ENCODE measurements at regions of chr11 and their contacts with region 1.

Region 1: DNA sequence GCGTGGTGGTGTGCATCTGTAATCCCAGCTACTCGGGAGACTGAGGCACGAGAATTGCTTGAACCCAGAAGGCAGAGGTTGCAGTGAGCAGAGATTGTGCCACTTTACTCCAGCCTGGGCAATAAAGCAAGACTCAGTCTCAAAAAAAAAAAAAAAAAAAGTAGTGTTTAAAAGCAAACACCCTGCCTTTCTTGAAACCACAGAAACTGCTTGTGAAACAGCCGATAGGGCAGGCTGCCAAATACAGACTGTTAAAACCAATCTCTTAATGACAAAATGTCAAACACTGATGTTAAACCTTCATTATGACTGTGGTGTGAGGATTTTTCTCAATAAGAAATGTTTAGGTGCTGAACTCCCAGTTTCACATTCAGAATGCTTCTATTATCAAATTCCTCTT is 27.3 kb downstream of the MARK2 start:
- DNase-seq: peak; percentile 60
- H3K4me3 Mint-ChIP-seq: peak overlapping the region; percentile 68
- H3K27ac Mint-ChIP-seq: peak overlapping the region; percentile 45
- H3K4me1 Mint-ChIP-seq: peaks cover 78% of the 10 kb centered on the region
- H3K27me3 Mint-ChIP-seq: no peaks in the 10 kb centered on the region

Region 2: GRCh38 chr11:63813035-63813562 is 53.1 kb before region 1 on chr11 and contains the start of gene SPINDOC:
- intact Hi-C with region 1: loop called (anchors 1 kb)
- DNase-seq: peak; percentile 78
- H3K4me3 Mint-ChIP-seq: peak within 1 kb of the TSS; percentile 88
- H3K27ac Mint-ChIP-seq: peak within 1 kb of the TSS; percentile 55
- H3K4me1 Mint-ChIP-seq: peaks cover 34% of the 10 kb centered on the region
- H3K27me3 Mint-ChIP-seq: no peaks in the 10 kb centered on the region
- total RNA-seq, gene SPINDOC: 60.0 and 64.3 TPM in 2 replicates

Region 3: GRCh38 chr11:63855975-63856749 is 10.0 kb before region 1 on chr11:
- intact Hi-C with region 1: loop called (anchors 2 kb)
- DNase-seq: no peak
- H3K4me3 Mint-ChIP-seq: no peak overlapping the region
- H3K27ac Mint-ChIP-seq: no peak overlapping the region
- H3K4me1 Mint-ChIP-seq: peaks cover 29% of the 10 kb centered on the region
- H3K27me3 Mint-ChIP-seq: no peaks in the 10 kb centered on the region

Region 4: GRCh38 chr11:63888170-63889086 is 22.2 kb after region 1 on chr11:
- intact Hi-C with region 1: loop called (anchors 1 kb)
- DNase-seq: peak; percentile 57
- H3K4me3 Mint-ChIP-seq: peak overlapping the region; percentile 86
- H3K27ac Mint-ChIP-seq: peak overlapping the region; percentile 83
- H3K4me1 Mint-ChIP-seq: peaks cover 77% of the 10 kb centered on the region
- H3K27me3 Mint-ChIP-seq: no peaks in the 10 kb centered on the region

Region 5: DNA sequence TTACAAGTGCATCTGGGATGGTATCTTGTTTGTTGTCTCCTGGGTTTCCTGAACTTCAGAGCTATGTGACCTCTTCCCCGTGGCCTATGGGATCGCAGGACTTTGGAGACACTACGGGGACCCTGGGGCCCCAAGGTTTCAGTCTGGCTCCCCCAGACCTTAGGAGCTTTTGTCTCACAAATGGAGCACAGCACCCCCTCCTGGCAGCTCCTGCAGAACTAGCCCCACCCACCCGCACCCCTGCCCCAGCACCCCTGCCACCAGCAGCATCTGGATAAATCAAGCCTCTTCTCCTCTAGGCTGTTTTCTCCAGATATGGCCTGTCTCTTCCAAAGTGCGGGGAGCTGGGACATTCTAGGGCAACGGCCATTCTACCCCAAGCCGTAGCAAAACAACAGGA is 40.4 kb after region 1 on chr11:
- intact Hi-C with region 1: loop called (anchors 5 kb)
- DNase-seq: peak; percentile 20
- H3K4me3 Mint-ChIP-seq: no peak overlapping the region
- H3K27ac Mint-ChIP-seq: no peak overlapping the region
- H3K4me1 Mint-ChIP-seq: no peaks in the 10 kb centered on the region
- H3K27me3 Mint-ChIP-seq: no peaks in the 10 kb centered on the region

Region 6: GRCh38 chr11:63986156-63986931 is 120.1 kb after region 1 on chr11 and contains the start of gene OTUB1:
- intact Hi-C with region 1: loop called (anchors 1 kb)
- DNase-seq: peak; percentile 86
- H3K4me3 Mint-ChIP-seq: peak within 1 kb of the TSS; percentile 97
- H3K27ac Mint-ChIP-seq: peak within 1 kb of the TSS; percentile 96
- H3K4me1 Mint-ChIP-seq: peaks cover 32% of the 10 kb centered on the region
- H3K27me3 Mint-ChIP-seq: no peaks in the 10 kb centered on the region
- total RNA-seq, gene OTUB1: 104 and 114 TPM in 2 replicates

Region 7: GRCh38 chr11:64246871-64247728 is 380.9 kb after region 1 on chr11 and contains the start of gene PPP1R14B:
- intact Hi-C with region 1: no loop called
- DNase-seq: peak; percentile 79
- H3K4me3 Mint-ChIP-seq: peak within 1 kb of the TSS; percentile 94
- H3K27ac Mint-ChIP-seq: peak within 1 kb of the TSS; percentile 94
- H3K4me1 Mint-ChIP-seq: peaks cover 29% of the 10 kb centered on the region
- H3K27me3 Mint-ChIP-seq: peaks cover 1% of the 10 kb centered on the region
- total RNA-seq, gene PPP1R14B: 238 and 248 TPM in 2 replicates